Lower leg skin (tissue), 4 donors: ENCODE measurements at regions of chr12 and their contacts with region 1.

Region 1: DNA sequence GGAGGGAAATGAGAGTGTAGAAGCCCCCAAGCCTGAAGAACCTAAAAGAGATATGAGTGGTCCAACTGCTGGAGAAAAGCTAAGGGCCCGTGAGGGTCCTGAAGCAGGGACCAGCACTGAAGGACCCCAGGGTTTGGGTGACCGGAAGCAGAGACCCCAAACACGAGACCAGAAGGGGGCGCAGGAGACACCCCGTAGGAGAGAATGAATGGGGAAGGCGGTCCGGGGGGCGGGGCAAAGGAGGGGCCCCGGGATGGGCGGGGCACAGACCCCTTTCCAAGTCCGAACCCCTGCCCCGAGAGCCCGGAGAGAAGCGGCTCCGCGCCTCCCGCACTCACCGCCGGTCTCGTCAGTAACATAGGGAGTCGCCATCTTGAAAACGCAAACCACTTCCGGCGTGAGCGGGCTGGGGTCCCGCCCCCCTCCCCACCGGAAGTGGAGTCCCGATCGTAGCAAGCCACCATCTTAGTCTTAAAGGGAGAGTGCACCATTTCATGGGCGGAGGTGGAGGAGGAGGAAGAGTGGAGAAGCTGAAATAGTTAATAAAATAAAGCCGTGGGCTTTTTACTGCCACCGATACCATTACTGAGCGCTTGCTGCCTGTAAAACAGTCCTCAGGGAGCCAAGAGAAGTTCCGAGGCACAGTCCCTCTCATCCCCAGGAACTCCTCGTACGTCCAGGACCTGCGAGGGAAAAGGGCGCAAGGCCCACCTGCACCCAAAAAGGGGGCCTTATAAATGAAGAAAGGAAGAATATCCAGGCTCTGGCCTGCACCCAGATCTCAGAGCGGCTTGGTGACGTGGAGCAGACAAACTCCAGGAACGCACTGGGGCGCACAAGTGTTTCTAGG is 731 bp downstream of the PYM1 start:
- DNase-seq: peak; percentile 89 to 97
- H3K4me3 ChIP-seq: peak overlapping the region; percentile 73
- CTCF ChIP-seq: peak in 1 of 3 donors; percentile 77
- POLR2A ChIP-seq: no peak

Region 2: GRCh38 chr12:55829967-55830600 is 96.9 kb before region 1 on chr12:
- intact Hi-C with region 1: loop called (anchors 10 kb)
- DNase-seq: peak in 1 of 2 donors; percentile 92
- H3K4me3 ChIP-seq: peak overlapping the region; percentile 74
- CTCF ChIP-seq: no peak
- POLR2A ChIP-seq: no peak

Region 3: GRCh38 chr12:56079665-56080555 is 152.9 kb after region 1 on chr12 and contains the start of gene ERBB3:
- intact Hi-C with region 1: no loop called
- DNase-seq: peak; percentile 77 to 96
- H3K4me3 ChIP-seq: peak within 1 kb of the TSS; percentile 50
- CTCF ChIP-seq: no peak
- POLR2A ChIP-seq: no peak
- total RNA-seq, gene ERBB3: 177 to 209 (median 202) TPM